ENCODE measurements at regions of chr2 and their contacts with region 1.

Region 1: DNA sequence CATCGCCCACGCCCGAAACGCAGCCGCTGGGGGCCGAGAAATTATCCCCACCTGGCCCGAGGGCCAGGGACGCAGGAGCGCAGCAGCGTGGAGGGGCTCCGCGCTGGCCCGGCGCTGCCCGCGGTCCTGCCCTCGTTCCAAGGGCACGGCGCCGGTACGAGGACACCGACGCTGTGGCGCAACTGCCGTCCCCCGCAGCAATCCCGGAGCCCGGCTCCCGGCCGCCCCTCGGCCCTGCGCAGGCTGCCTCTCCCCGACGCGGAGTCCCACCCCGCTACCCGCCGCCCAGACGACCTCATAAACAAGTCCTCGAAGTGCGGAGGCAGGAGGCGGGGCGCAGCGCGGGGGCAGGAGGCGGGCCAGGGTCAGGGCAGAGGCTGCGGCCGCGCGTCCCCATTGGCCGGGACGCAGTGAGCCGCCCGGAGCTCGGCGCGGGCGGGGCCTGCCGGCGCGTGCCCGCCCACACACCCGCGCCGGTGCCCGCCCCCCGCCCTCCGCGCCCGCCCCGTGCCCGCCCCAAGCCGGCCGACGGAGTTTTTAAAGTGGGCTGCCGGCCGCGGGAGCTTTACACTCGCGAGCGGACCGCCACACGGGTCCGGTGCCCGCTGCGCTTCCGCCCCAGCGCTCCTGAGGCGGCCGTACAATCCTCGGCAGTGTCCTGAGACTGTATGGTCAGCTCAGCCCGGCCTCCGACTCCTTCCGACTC is at the start of gene EPAS1:
- DNase-seq: peak; percentile 44 to 84 (median 76)
- H3K4me3 ChIP-seq: peak within 1 kb of the TSS; percentile 51 to 82 (median 70)
- H3K27ac ChIP-seq: peak within 1 kb of the TSS; percentile 31 to 94 (median 85)
- H3K27me3 ChIP-seq: peaks cover 0 to 46% (median 17%) of the 10 kb centered on the region in 45 donors
- CTCF ChIP-seq: no peak
- total RNA-seq, gene EPAS1: 63.6 to 481 (median 129) TPM

Region 2: DNA sequence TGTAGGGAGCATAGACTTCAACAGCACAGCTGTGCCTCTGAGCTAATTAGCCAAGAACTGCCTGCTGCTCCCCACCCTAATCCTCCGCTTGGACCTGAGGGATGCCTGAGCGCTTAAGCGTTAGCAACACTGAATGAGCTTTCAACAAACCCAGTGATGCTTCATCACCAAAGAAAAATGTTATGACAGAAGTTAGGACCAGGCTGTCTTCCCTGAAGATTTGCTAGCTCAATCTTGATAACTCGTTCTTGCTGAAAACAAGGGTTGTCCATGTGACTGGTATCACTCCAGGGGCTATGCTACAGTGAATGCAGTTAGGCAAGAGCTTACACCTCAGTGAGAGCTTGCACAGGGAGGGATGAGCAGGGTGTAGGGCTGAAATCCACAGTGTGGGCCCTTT is 1097.0 kb before region 1 on chr2:
- intact Hi-C with region 1: no loop called
- DNase-seq: no peak
- H3K4me3 ChIP-seq: no peak overlapping the region
- H3K27ac ChIP-seq: no peak overlapping the region
- H3K27me3 ChIP-seq: no peaks in the 10 kb centered on the region
- CTCF ChIP-seq: no peak

Region 3: GRCh38 chr2:46062637-46063412 is 234.2 kb before region 1 on chr2:
- intact Hi-C with region 1: loop called in 1 of 2 experiments (anchors 2 kb)
- DNase-seq: peak in 8 of 10 donors; percentile 52 to 78 (median 68)
- H3K4me3 ChIP-seq: no peak overlapping the region
- H3K27ac ChIP-seq: peak overlapping the region in 34 of 59 donors; percentile 1 to 75 (median 44)
- H3K27me3 ChIP-seq: no peaks in the 10 kb centered on the region
- CTCF ChIP-seq: peak; percentile 76 to 96 (median 89)

Region 4: GRCh38 chr2:46230115-46230571 is 66.8 kb before region 1 on chr2:
- intact Hi-C with region 1: loop called in 1 of 2 experiments (anchors 5 kb)
- DNase-seq: peak in 1 of 10 donors; percentile 51
- H3K4me3 ChIP-seq: no peak overlapping the region
- H3K27ac ChIP-seq: peak overlapping the region in 2 of 59 donors; percentile 6 to 21
- H3K27me3 ChIP-seq: no peaks in the 10 kb centered on the region
- CTCF ChIP-seq: peak in 22 of 56 donors; percentile 5 to 43 (median 18)

Region 5: DNA sequence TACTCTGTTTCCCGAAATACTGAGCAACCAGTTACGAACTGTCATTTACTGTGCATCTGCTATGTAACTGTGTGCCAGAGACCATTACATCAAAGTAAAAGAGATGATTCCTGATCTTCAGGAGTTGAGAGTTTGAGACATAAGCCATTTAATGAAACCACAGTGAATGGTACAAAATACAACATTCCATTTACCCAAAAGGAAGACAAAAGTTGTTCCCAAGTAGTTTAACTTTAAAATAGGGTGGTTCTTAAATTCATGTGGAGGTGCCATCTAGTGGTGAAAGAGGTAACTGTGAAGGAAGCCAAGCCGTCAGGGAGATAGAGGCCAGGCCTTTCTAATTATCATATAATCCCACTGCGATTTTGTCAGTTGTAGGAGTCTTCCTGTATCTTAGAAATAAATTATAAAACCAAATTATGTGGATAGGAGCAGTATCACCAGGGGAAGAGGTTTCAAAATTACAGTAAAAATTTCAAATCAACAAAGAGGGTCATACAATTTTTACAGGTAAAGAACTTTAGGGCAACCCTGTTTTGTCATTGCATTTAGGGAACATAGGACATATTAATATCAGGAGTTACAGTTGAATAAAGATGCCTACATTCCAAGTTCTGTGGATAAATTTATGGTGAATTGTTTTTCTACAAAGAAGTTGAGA is 67.9 kb after region 1 on chr2:
- intact Hi-C with region 1: loop called in 1 of 2 experiments (anchors 5 kb)
- DNase-seq: peak in 2 of 10 donors; percentile 18 to 34
- H3K4me3 ChIP-seq: no peak overlapping the region
- H3K27ac ChIP-seq: peak overlapping the region in 12 of 59 donors; percentile 4 to 51 (median 24)
- H3K27me3 ChIP-seq: no peaks in the 10 kb centered on the region
- CTCF ChIP-seq: peak; percentile 63 to 93 (median 88)

Region 6: DNA sequence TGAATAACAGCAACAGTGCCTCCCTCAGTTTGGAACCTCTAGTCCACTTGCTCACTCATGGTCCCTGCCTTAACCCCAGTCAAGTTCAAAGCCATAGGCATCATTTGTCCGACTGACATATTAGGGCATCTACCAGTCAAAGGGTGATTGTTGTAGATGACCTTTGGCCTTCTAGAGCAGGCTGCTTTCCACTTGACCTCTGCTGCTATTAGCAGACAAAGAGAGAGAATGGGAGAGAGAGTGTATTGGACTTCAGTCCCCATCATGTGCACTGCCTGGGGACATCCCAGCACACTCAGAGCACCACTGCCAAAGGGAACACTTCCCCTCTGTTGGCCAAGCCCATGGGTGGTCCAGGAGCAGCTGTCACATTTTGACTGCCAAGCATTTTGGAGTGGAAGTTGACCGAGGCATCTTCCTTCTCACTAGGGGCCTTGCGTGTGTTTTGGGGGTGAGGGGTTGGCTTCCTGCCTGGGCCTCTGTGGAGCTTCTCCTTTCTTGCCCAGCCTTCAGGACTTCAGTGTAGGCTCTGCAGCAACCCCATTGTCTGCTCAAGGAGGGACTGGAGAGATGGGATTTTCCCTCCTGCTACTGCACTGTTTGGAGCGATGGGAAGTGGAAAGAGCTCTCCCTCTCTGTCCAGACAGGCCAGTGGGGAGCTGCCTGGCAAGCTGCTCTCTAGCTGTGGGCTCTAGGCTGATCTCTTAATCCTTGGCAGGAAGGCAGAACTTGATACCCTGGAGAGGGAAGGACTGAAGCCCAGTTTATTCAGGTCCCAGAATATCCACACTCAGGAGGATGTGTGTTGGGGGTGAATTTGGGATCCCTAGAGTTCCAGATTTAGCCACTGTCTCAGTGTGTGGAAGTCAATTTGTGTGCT is 250.5 kb after region 1 on chr2:
- intact Hi-C with region 1: loop called in 1 of 2 experiments (anchors 5 kb)
- DNase-seq: peak in 1 of 10 donors; percentile 77
- H3K4me3 ChIP-seq: peak overlapping the region in 1 of 59 donors; percentile 2
- H3K27ac ChIP-seq: peak overlapping the region in 54 of 59 donors; percentile 1 to 81 (median 58)
- H3K27me3 ChIP-seq: no peaks in the 10 kb centered on the region
- CTCF ChIP-seq: no peak